ENCODE measurements at regions of chr17 and their contacts with region 1.

Region 1: DNA sequence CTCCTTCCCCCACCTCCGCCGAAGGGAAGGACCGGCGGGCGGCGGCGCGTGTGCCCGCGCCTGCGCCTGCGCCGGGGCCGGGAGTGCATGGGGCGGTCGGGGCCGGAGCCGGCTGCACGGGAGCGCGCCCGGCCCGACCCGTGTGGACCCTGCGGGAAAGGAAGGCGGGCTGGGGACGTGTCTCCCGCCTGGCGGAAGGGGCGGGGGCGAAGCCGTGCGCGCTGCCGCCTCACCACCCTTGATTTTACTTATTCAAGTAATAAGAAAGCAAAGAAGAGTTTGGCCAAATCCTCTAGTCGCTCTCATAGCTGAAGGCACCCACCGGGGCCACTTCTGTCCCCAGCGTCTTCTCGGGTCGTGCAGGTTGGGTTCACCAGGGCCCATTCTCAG is 596 bp upstream of the PFN1 start:
- DNase-seq: peak; percentile 90
- H3K4me3 Mint-ChIP-seq: peak overlapping the region; percentile 74
- H3K27ac Mint-ChIP-seq: peak overlapping the region; percentile 24
- H3K4me1 Mint-ChIP-seq: peaks cover 42% of the 10 kb centered on the region
- H3K27me3 Mint-ChIP-seq: no peaks in the 10 kb centered on the region
- CTCF ChIP-seq: no peak

Region 2: DNA sequence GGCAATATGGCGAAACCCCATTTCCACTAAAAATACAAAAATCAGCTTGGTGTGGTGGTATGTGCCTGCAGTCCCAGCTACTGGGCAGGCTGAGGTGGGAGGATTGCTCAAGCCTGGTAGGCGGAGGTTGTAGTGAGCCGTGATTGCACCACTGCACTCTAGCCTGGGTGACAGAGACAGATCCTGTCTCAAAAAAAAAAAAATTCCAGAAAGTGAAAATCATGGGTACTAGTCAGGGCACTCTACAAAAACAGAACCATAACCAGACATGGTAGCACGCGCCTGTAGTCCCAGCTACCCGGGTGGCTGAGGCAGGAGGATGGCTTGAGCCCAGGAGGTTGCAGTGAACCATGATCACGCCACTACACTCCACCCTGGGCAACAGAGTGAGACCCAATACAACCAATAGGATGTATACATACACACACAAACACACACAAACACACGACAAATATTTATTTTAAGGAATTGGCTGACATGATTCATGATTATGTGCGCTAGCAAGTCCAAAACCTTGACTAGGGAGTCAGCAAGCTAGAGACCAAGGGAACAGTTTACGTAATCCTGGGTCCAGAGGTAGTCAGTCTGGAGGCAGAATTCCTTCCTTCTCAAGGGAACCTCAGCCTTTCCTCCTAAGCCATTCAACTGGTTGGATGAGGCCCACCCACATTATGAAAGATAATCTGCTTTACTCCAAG is 28.4 kb before region 1 on chr17:
- CTCF ChIA-PET with region 1: no interaction called
- POLR2A ChIA-PET with region 1: interaction called, 19 read pairs
- intact Hi-C with region 1: no loop called
- DNase-seq: peak; percentile 83
- H3K4me3 Mint-ChIP-seq: peak overlapping the region; percentile 39
- H3K27ac Mint-ChIP-seq: peak overlapping the region; percentile 74
- H3K4me1 Mint-ChIP-seq: peaks cover 16% of the 10 kb centered on the region
- H3K27me3 Mint-ChIP-seq: no peaks in the 10 kb centered on the region
- CTCF ChIP-seq: no peak

Region 3: GRCh38 chr17:4986951-4987766 is 38.2 kb after region 1 on chr17 and contains the start of gene CAMTA2:
- CTCF ChIA-PET with region 1: interaction called, 5 read pairs
- POLR2A ChIA-PET with region 1: interaction called, 21 read pairs
- intact Hi-C with region 1: no loop called
- DNase-seq: peak; percentile 67
- H3K4me3 Mint-ChIP-seq: peak within 1 kb of the TSS; percentile 87
- H3K27ac Mint-ChIP-seq: peak within 1 kb of the TSS; percentile 84
- H3K4me1 Mint-ChIP-seq: peaks cover 28% of the 10 kb centered on the region
- H3K27me3 Mint-ChIP-seq: no peaks in the 10 kb centered on the region
- CTCF ChIP-seq: peak; percentile 60
- total RNA-seq, gene CAMTA2: 126 and 154 TPM in 2 replicates

Region 4: DNA sequence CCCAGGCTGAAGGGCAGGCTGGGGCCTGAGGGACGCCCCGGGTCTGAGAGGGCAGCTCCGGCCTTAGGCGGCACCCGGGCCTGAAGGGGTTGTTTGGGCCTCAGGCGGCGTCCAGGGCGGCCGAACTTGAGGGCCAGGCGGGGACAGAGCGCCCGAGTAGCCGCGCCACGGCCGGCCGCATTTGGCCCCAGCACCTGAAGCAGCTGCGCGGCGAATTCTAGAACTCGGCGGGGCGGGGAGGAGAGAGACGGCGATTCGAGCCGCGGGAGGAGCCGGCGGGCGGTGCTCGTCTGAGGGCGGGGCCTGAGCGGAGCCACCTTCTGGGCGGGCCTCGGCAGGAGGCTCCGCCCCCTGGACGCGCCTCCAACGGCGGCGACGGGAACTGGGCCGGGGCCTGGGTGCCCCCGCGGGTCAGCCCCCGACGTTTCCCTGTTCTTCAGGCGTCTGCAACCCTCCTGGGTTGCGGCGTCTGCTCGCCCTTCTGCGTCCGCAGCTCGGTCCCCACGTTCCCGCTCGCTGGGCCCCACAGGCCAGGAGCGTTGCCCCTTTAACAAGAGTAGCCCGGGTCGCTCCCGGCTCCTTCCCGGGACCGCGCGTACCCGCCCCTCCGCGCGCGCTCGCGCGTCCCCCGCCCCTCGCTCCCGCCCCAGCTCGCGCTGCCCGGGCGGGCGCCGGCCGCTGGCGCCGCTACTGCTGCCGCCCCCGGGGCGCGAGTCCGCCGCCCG is 48.5 kb after region 1 on chr17 and contains the starts of genes INCA1 and KIF1C:
- CTCF ChIA-PET with region 1: no interaction called
- POLR2A ChIA-PET with region 1: interaction called, 16 read pairs
- intact Hi-C with region 1: no loop called
- DNase-seq: peak; percentile 90
- H3K4me3 Mint-ChIP-seq: peak within 1 kb of the TSS; percentile 97
- H3K27ac Mint-ChIP-seq: peak within 1 kb of the TSS; percentile 86
- H3K4me1 Mint-ChIP-seq: peaks cover 23% of the 10 kb centered on the region
- H3K27me3 Mint-ChIP-seq: no peaks in the 10 kb centered on the region
- CTCF ChIP-seq: no peak
- total RNA-seq, gene INCA1: 0.44 and 0.49 TPM in 2 replicates
- total RNA-seq, gene KIF1C: 84.8 and 100 TPM in 2 replicates

Region 5: DNA sequence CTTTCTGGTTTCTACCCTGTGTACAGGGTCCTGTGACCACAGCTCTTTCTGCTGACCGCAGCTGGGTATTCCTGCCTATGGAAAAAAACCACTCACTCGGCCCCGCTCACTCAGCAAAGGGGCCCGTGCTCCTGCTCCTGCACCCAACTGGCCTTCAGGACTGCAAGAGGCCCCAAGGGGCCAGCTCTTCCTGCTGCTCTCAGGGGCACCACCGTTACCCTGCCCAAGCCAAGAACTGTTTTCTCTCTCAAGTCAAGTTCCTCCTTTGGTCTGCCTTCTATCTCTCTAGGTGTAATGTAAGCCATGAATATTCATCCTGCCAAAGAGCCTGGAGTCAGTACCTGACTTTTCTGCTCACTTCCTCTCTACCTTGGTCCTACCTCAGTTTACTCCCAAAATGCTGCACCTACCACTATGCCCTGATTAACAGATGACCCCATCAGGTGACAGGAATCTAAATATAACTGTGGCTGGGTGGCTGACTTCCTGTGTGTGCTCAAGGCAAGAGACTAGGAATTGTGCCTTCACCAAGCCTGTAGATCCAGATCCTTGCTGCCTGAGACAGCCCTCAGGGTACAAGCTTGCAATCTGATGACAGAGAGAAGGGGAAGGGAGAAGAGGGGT is 306.1 kb after region 1 on chr17:
- CTCF ChIA-PET with region 1: no interaction called
- POLR2A ChIA-PET with region 1: no interaction called
- intact Hi-C with region 1: no loop called
- DNase-seq: no peak
- H3K4me3 Mint-ChIP-seq: no peak overlapping the region
- H3K27ac Mint-ChIP-seq: peak overlapping the region; percentile 10
- H3K4me1 Mint-ChIP-seq: no peaks in the 10 kb centered on the region
- H3K27me3 Mint-ChIP-seq: no peaks in the 10 kb centered on the region
- CTCF ChIP-seq: no peak